AG04449 (cell line): ENCODE measurements at regions of chr7 and their contacts with region 1.

Region 1: GRCh38 chr7:5596046-5596895 is 172.6 kb upstream of the TNRC18 start:
- DNase-seq: peak; percentile 60
- H3K4me3 ChIP-seq: peak overlapping the region; percentile 87
- CTCF ChIP-seq: no peak

Region 2: GRCh38 chr7:5610500-5611186 is 14.4 kb after region 1 on chr7:
- CTCF ChIA-PET with region 1: interaction called, 3 read pairs
- POLR2A ChIA-PET with region 1: interaction called, 16 read pairs
- DNase-seq: no peak
- H3K4me3 ChIP-seq: no peak overlapping the region
- CTCF ChIP-seq: no peak

Region 3: GRCh38 chr7:5636914-5637313 is 40.6 kb after region 1 on chr7:
- CTCF ChIA-PET with region 1: no interaction called
- POLR2A ChIA-PET with region 1: interaction called, 10 read pairs
- DNase-seq: peak; percentile 59
- H3K4me3 ChIP-seq: no peak overlapping the region
- CTCF ChIP-seq: no peak